Mucosa of descending colon (tissue), 3 donors: ENCODE measurements at regions of chr1 and their contacts with region 1.

Region 1: DNA sequence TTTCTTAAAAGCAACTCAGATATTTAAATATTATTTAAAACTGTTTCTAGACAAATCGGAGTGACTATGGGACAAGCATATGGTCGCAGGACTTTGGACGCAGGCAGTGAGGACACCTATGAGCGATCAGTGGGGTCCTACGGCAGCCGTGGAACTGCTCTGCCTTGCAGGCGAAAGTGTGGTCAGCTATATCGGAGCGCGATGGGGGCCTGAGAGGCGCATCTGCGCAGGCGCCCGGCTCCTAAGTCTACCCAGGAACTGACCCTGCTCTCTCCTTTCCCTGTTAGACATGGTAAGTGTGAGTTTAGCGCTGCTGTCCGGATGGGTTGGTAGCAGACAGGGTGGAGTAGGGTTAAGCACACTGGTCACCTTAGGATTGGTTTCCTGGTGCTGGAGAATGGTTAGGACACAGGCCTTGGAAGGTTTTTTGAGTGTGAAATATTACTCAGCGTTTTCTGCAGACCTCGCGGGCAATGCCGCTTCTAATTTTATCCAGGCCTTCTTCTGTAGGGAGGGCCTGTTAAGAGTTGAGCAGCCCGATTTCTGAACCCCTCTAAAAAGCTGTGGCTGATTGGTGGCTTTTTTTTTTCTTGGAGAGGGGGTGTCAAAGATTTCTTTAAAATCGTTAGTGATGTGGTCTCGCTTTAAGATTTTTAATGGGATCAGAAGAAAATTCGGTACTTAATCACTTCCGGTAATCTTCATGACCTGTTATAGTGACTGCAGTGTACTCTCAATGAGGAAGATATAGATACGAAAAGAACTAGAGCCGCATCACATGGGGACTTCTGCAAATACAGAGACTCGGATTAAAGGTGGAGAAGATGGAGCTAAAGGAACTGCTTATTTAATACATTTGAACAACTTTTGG is at the start of gene RABGGTB:
- DNase-seq: peak; percentile 96 to 98 (median 97)
- ATAC-seq: peak; percentile 99
- H3K4me3 ChIP-seq: peak within 1 kb of the TSS; percentile 33
- H3K4me1 ChIP-seq: peaks cover 36% of the 10 kb centered on the region
- CTCF ChIP-seq: peak; percentile 24
- total RNA-seq, gene RABGGTB: 57.4 to 68.1 (median 66.8) TPM

Region 2: DNA sequence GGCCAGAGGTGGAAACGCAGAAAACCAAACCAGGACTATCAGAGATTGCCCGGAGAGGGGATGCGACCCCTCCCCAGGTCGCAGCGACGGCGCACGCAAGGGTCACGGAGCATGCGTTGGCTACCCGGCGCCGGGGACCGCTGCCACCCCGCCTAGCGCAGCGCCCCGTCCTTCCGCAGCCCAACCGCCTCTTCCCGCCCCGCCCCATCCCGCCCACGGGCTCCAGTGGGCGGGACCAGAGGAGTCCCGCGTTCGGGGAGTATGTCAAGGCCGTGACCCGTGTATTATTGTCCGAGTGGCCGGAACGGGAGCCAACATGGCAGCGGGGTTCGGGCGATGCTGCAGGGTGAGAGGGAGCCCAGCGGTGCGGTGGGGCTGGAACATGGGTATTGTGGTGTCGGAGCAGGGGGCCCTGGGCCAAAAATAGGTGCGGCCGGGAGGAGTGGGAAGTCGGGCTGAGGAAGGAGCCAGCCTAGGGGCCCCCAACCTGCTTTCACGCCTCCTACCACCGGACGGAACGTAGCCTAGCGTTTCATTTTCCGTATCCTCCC is 61.7 kb before region 1 on chr1 and contains the start of gene ACADM:
- intact Hi-C with region 1: loop called in 1 of 2 experiments (anchors 10 kb)
- DNase-seq: peak; percentile 90 to 95 (median 93)
- ATAC-seq: peak; percentile 98
- H3K4me3 ChIP-seq: peak within 1 kb of the TSS; percentile 62
- H3K4me1 ChIP-seq: peaks cover 13% of the 10 kb centered on the region
- CTCF ChIP-seq: no peak
- total RNA-seq, gene ACADM: 59.3 to 79.5 (median 78.6) TPM